Body of pancreas (tissue), 4 donors: ENCODE measurements at regions of chr2 and their contacts with region 1.

Region 1: DNA sequence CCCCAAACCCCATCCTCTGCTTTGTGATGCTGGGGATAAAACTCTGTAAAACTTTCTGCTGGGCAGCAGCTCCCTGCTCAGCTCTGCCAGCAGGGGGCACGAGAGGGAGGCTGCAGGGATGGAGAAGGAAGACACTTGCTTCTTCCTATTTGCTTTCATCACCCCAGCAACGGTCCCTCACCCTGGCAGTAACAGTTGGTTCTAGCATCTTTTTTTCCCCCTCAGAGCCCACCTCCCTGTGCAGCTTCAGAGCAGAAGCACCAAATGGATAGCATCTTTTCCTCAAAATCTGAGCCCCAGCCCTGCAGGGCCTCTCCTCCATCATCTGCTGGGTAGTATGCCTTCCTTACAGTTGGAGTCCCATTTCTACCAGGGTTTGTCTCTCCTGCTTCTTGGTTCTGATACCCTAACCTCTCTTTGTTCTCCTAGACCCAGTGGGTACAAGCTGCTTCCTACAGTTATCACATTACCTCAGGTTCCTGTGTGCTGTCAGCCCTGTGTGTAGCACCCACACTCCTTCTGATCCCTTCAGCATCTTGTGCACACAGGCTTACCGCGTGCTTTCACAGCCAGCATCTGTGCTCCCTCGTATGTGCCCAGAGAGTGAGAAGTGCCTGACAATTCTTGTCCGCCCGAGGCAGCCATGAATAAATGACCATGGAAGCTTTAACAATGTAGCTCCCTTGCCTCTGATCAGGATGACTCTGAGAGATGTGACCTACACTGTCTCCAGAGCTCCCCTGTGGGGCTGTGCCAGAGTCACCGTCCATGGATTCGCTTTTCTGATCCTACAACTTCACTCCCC is 14.5 kb downstream of the CKAP2L start:
- DNase-seq: peak; percentile 62 to 66 (median 63)
- ATAC-seq: peak; percentile 65
- H3K4me3 ChIP-seq: no peak overlapping the region
- H3K27ac ChIP-seq: no peak overlapping the region
- H3K4me1 ChIP-seq: peaks cover 9% of the 10 kb centered on the region
- H3K27me3 ChIP-seq: no peaks in the 10 kb centered on the region
- CTCF ChIP-seq: peak; percentile 62 to 89 (median 75)
- POLR2A ChIP-seq: no peak

Region 2: GRCh38 chr2:111897630-111897923 is 852.4 kb before region 1 on chr2:
- intact Hi-C with region 1: no loop called
- DNase-seq: no peak
- ATAC-seq: no peak
- H3K4me3 ChIP-seq: peak overlapping the region; percentile 78 to 88
- H3K27ac ChIP-seq: peak overlapping the region; percentile 75 to 87 (median 78)
- H3K4me1 ChIP-seq: peaks cover 27% of the 10 kb centered on the region
- H3K27me3 ChIP-seq: no peaks in the 10 kb centered on the region
- CTCF ChIP-seq: no peak
- POLR2A ChIP-seq: no peak

Region 3: DNA sequence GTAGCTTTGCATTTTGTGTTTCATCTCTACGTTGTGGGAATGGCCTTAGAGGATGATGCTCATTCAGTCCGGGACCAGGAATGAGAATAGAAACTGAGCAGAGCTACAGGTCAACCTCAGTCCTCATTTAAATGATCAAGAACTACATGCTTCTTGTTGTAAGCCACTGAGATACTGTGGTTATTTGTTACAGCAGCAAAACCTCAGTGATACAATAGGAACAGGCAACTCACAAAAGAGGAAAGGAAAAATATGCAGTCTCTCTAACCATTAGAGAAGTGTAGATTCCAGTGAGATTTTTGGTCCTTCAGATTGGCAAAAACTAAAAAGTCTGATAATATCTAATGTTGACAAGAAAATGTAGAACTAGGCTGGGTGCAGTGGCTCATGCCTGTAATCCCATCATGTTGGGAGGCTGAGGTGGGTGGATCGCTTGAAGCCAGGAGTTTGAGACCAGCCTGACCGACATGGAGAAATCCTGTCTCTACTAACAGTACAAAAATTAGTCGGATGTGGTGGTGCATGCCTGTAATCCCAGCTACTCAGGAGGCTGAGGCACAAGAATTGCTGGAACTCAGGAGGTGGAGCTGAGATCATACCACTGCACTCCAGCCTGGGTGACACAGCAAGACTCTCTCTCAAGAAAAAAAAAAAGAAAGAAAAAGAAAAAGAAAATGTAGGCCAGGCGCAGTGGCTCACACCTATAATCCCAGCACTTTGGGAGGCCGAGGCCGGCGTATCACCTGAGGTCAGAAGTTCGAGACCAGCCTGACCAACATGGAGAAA is 152.2 kb before region 1 on chr2:
- intact Hi-C with region 1: no loop called
- DNase-seq: no peak
- ATAC-seq: no peak
- H3K4me3 ChIP-seq: no peak overlapping the region
- H3K27ac ChIP-seq: no peak overlapping the region
- H3K4me1 ChIP-seq: peaks cover 19% of the 10 kb centered on the region
- H3K27me3 ChIP-seq: no peaks in the 10 kb centered on the region
- CTCF ChIP-seq: no peak
- POLR2A ChIP-seq: no peak

Region 4: GRCh38 chr2:112645310-112646101 is 104.5 kb before region 1 on chr2 and contains the start of gene SLC20A1:
- intact Hi-C with region 1: no loop called
- DNase-seq: peak; percentile 96 to 97 (median 96)
- ATAC-seq: peak; percentile 91
- H3K4me3 ChIP-seq: peak within 1 kb of the TSS; percentile 82 to 91
- H3K27ac ChIP-seq: peak within 1 kb of the TSS; percentile 79 to 99 (median 98)
- H3K4me1 ChIP-seq: peaks cover 44% of the 10 kb centered on the region
- H3K27me3 ChIP-seq: no peaks in the 10 kb centered on the region
- CTCF ChIP-seq: peak in 5 of 7 experiments; percentile 20 to 55 (median 40)
- POLR2A ChIP-seq: peak; percentile 100
- total RNA-seq, gene SLC20A1: 20.5 to 50.1 TPM

Region 5: DNA sequence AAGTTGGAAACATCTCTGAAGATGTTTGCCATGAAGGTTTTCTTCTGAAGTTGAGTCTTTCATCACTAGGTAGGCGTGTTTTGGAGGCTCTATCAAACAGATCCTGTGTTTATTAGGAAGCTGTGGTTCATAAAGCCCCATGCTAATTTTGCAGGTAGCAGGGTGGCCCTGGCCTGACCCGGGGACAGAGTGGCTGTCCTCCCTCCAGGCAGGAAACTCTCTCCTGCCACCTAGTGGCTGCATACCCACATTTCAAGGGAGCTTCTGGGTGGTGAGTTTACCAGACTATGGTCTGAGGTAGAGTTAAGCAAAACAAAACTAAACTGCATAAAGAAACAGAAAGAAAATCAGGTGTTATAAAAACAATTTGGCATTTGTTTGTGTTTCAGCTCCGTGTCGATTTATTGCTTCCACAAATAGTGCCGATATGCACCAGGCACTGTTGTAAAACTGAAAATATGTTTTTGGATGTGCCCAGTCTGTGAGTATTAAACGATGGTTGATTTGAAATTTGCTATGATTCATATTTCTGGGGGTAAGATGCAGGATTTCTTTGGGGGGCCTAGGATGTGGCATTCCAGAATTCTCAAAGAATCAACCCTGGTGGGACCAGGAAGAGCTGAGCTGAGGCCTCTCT is 135.0 kb after region 1 on chr2:
- intact Hi-C with region 1: loop called (anchors 10 kb)
- DNase-seq: peak; percentile 45 to 65 (median 56)
- ATAC-seq: peak; percentile 42
- H3K4me3 ChIP-seq: no peak overlapping the region
- H3K27ac ChIP-seq: no peak overlapping the region
- H3K4me1 ChIP-seq: no peaks in the 10 kb centered on the region
- H3K27me3 ChIP-seq: no peaks in the 10 kb centered on the region
- CTCF ChIP-seq: peak; percentile 52 to 74 (median 68)
- POLR2A ChIP-seq: no peak

Region 6: DNA sequence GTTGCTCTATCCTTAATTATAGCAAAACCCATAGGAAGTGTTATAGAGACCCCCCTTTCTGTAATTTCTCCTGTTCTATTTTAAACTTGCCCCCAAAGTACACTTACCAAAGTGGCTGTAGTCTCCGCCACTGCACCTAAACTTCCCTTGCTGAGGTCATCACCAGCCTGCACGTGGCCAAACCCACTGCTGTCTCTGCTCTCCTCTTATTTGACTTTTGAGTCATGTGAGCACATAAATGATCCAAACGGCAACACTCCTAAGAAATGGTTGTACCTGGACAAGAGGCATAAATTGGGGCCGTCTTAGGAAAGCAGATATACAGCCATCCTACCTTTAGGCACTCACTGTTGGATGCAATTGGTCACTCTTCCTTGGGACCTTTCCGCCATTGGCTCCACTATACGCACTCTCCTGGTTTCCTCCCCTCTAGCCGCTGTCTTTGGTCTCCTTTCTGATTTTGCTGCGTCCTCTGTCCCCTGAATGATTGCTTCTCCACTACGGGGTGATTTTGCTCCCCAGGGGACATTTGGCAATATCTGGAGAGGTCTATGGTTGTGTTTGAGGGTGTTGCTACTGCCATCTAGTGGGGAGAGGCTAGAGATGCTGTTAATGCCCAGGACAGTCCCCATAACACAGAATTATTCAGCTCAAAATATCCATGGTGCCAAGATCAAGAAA is 208.6 kb after region 1 on chr2:
- intact Hi-C with region 1: loop called (anchors 10 kb)
- DNase-seq: peak; percentile 21 to 45 (median 36)
- ATAC-seq: peak; percentile 74
- H3K4me3 ChIP-seq: no peak overlapping the region
- H3K27ac ChIP-seq: no peak overlapping the region
- H3K4me1 ChIP-seq: no peaks in the 10 kb centered on the region
- H3K27me3 ChIP-seq: no peaks in the 10 kb centered on the region
- CTCF ChIP-seq: peak; percentile 55 to 79 (median 69)
- POLR2A ChIP-seq: no peak